HEK293T (cell line): ENCODE measurements at regions of chr6 and their contacts with region 1.

Region 1: DNA sequence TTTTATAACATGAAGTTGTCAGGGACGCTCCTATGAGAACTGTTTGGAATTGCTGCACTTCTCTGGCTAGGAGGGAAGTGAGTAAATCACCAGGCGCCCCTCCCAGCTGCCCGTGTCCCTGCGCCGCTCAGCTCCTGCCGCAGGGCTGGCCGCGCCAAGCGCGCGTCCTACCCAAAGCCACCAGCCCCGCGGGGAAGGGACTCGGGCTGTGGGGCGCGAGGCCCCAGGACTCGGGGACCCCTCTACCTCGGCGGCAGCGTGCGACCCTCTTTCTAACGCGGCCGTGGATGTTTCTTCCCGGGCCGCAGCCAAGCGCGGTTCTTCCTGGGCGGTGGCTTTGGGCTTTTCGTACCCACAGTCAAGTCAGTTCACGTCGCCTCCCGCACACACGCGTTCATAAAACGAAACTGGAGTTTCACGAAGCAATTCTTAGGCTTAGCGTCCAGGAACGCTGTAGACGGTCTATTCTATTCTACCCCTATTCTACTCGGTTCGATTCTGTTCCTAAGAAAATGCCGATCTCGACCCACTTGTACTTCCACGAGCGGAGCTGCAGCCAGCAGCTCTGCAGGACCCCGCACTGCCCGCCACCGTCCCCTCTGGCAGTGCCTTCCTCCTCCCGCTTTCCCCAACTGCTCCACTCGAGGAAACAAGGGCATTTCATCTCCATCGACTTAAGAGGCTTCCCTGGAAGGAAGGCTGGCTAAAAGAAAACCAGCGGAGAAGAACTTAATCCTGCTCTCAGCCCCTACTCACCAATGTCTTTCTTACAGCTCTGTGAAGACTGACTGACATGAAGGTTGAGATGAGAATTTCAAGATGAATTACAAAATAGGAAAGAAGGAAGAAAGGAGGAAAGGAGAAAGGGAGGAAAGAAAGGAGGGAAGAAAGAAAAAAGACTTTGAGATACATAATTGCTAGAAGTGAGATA is 15.4 kb downstream of the FOXC1 start:
- DNase-seq: no peak

Region 2: DNA sequence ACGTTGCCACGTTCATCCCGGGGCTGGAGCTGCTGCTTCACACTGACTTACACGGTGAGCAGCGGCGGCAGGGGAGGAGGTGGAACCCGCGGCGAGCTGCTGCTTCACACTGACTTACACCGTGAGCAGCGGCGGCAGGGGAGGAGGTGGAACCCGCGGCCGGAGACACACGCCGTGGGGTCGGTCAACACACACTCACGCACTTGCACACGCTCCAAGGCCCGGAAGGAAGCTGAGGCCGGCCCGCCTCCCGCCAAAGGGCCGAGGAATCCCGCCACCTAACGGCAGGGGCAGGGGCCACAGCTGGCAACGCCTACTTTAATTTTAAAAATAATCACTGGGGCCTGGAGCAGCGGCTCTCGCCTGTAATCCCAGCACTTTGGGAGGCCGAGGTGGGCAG is 109.8 kb before region 1 on chr6:
- CTCF ChIA-PET with region 1: no interaction called
- POLR2A ChIA-PET with region 1: no interaction called
- DNase-seq: no peak

Region 3: DNA sequence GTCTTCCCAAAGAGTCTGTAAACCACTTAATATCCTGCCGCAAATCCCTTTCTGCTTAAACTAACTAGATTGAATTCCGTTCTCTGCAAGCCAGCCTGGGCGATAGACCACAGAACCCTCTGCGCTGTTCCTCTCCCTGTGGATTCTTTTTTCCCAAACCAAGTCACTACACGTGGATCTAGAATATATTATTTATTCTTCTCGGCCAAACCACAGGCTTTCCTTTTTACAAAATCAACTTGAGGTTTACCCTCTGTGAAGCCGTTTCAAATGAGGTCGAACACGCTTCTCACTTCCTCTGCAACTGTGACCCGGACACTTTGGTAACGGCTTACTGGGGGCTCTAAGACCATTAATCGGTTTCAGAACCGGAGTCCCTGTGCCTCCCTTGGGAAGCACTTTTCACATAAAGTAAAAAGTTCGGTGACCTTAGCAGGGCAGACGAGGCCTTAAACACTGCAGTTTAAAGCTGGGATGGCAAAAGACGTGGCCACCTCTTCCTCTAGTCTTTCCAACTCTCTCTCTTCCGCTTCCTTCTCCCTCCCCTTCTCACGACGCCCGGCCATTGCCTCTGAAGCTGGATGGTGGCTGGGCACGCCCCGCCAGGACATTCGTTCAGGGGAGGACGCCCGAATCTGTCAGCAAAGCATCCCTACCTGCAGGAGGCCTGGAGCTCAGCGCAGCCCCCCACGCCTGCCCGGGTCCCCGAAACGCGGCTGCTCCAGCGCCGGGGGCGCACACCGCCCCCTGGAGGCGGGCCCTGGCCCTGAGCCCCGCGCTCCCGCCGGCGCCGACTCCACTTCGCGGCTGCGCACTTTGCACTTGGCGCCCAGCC is 70.4 kb before region 1 on chr6:
- CTCF ChIA-PET with region 1: no interaction called
- POLR2A ChIA-PET with region 1: no interaction called
- DNase-seq: no peak

Region 4: GRCh38 chr6:1665214-1665613 is 40.1 kb after region 1 on chr6:
- CTCF ChIA-PET with region 1: no interaction called
- POLR2A ChIA-PET with region 1: interaction called, 38 read pairs
- DNase-seq: no peak